Activated CD4-positive, alpha-beta memory T cell treated with anti-CD3 and anti-CD28 coated beads for 36 hours (primary cell): ENCODE measurements at regions of chr12 and their contacts with region 1.

Region 1: GRCh38 chr12:29088611-29089219 is 60.4 kb upstream of the FAR2 start:
- DNase-seq: no peak
- H3K4me3 Mint-ChIP-seq: no peak overlapping the region
- H3K27ac Mint-ChIP-seq: no peak overlapping the region
- H3K4me1 Mint-ChIP-seq: no peaks in the 10 kb centered on the region
- H3K27me3 Mint-ChIP-seq: peaks cover 19% of the 10 kb centered on the region

Region 2: DNA sequence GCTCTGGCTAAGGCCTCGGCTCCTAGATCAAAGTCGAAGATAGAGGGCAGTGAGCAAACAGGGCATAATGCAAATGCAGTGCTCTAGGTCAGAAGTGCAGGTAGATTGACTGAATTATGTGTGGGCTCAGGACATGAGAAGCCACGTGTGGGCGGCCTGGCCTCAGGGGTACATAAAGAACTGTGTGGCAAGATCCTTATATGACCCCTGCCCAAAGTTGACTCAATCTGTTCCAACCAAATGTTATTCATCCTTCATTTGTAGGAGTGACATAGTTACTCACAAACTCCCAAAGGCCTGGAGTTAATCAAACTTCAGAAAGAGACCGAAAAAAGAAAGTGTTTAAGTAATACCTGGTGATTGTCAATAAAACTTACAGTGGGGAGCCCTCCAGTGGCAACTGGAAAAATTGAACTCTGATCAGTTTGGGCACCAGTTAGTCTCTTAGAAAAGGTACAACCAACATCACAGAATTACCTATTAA is 90.0 kb before region 1 on chr12:
- CTCF ChIA-PET with region 1: no interaction called
- POLR2A ChIA-PET with region 1: no interaction called
- intact Hi-C with region 1: no loop called
- DNase-seq: peak; percentile 24
- H3K4me3 Mint-ChIP-seq: no peak overlapping the region
- H3K27ac Mint-ChIP-seq: no peak overlapping the region
- H3K4me1 Mint-ChIP-seq: no peaks in the 10 kb centered on the region
- H3K27me3 Mint-ChIP-seq: peaks cover 11% of the 10 kb centered on the region

Region 3: DNA sequence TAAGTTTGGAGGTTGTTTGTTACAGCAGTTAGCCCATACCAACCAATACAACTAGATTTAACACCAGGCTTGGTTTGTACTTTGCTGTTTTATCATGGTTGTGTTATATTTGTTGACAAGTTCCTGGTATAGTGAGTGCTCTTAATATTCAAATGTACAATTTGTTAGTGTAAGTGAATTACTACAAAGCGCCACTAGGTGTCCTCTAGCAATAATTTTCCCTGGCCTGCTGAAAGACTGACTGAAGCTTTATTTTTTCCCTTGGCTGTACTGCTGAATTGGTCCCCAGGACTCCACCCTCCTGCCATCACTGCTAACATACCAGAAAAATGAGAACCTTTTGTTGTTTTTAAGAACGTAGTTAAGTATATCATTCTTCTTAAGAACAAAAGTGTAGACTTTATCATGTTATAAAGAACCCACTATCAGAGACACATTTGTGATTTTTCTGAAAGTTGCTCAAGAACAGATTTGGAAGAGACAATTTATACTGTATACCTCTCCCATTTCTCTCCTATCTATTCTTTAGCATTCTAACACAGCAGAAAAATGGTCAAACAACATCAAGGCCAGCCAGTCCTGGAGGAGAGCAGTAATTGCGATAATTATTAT is 15.0 kb before region 1 on chr12:
- CTCF ChIA-PET with region 1: interaction called, 12 read pairs
- POLR2A ChIA-PET with region 1: no interaction called
- intact Hi-C with region 1: no loop called
- DNase-seq: no peak
- H3K4me3 Mint-ChIP-seq: no peak overlapping the region
- H3K27ac Mint-ChIP-seq: no peak overlapping the region
- H3K4me1 Mint-ChIP-seq: no peaks in the 10 kb centered on the region
- H3K27me3 Mint-ChIP-seq: peaks cover 21% of the 10 kb centered on the region

Region 4: GRCh38 chr12:29519585-29520182 is 431.0 kb after region 1 on chr12:
- CTCF ChIA-PET with region 1: no interaction called
- POLR2A ChIA-PET with region 1: no interaction called
- intact Hi-C with region 1: loop called (anchors 10 kb)
- DNase-seq: no peak
- H3K4me3 Mint-ChIP-seq: no peak overlapping the region
- H3K27ac Mint-ChIP-seq: no peak overlapping the region
- H3K4me1 Mint-ChIP-seq: no peaks in the 10 kb centered on the region
- H3K27me3 Mint-ChIP-seq: peaks cover 9% of the 10 kb centered on the region